ENCODE measurements at regions of chr4 and their contacts with region 1.

Region 1: GRCh38 chr4:110510955-110511544 is 35.1 kb downstream of the ENPEP start:
- DNase-seq: no peak
- ATAC-seq: peak; percentile 53
- H3K4me3 Mint-ChIP-seq: no peak overlapping the region
- H3K27ac Mint-ChIP-seq: no peak overlapping the region
- H3K4me1 Mint-ChIP-seq: peaks cover 11% of the 10 kb centered on the region
- H3K27me3 Mint-ChIP-seq: peaks cover under 1% of the 10 kb centered on the region

Region 2: DNA sequence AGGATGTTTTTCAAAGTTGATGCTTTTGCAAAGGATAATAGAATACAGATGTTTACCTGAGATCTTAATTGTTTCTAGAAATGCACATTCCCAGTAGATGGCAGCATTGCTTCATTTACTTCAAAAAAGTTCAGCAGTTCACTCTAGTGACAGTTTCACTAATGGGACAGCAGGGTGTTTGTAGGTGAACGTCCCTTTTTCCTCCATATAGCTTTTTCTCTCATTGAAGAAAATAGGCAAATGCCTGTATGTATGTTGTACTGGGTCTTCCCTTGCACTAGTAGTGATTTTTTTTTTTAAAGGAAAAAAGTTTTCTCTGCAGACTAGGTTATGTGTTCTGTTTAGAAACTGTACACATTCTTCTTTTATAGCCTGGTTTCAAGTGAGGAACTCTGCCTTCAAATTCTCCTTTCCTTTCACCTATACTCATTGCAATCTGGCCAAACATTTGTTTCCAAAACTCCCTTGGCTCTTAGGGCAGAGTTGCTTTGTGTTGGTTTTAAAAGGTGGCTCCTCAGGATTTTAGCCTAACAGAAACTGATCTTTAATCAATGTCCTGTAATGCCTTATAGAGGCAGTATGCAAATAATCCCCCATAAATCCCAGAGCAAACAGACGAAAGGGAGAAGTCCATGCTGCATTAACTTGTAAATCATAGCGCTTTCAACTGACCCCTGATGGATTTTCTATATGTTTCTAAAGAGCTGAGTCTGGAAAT is 512.0 kb before region 1 on chr4:
- CTCF ChIA-PET with region 1: interaction called, 398 read pairs
- POLR2A ChIA-PET with region 1: no interaction called
- intact Hi-C with region 1: loop called (anchors 1 kb)
- DNase-seq: no peak
- ATAC-seq: peak; percentile 31
- H3K4me3 Mint-ChIP-seq: no peak overlapping the region
- H3K27ac Mint-ChIP-seq: no peak overlapping the region
- H3K4me1 Mint-ChIP-seq: peaks cover 10% of the 10 kb centered on the region
- H3K27me3 Mint-ChIP-seq: peaks cover 9% of the 10 kb centered on the region

Region 3: DNA sequence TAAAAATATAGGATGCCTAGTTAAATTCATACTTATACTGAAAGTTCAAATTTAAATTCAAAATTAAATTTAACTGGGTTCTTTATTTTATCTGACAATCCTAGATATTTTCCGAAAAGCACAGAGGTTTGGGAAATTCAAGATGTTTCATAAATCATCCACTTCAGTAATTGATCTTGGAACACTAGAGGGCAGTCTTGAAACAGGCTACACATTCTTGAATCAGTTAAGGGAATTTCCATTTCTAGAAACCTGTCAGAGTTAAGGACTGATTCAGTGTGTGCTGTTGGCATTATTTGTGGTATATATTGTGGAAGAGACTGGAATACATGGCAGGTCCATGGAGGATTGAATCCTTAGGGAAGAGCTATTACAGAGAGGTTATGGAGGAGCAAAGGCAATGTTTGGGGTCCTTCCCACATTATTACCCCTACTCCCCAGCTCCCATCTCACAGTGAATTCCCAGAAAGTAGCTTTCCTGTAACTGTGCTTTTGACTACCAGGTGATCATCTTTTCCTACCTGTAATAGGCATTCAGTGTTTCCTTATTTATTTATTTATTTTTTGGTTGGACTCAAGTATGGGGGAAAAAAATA is 505.5 kb before region 1 on chr4:
- CTCF ChIA-PET with region 1: interaction called, 398 read pairs
- POLR2A ChIA-PET with region 1: no interaction called
- intact Hi-C with region 1: loop called (anchors 1 kb)
- DNase-seq: no peak
- ATAC-seq: peak; percentile 60
- H3K4me3 Mint-ChIP-seq: no peak overlapping the region
- H3K27ac Mint-ChIP-seq: no peak overlapping the region
- H3K4me1 Mint-ChIP-seq: no peaks in the 10 kb centered on the region
- H3K27me3 Mint-ChIP-seq: no peaks in the 10 kb centered on the region

Region 4: DNA sequence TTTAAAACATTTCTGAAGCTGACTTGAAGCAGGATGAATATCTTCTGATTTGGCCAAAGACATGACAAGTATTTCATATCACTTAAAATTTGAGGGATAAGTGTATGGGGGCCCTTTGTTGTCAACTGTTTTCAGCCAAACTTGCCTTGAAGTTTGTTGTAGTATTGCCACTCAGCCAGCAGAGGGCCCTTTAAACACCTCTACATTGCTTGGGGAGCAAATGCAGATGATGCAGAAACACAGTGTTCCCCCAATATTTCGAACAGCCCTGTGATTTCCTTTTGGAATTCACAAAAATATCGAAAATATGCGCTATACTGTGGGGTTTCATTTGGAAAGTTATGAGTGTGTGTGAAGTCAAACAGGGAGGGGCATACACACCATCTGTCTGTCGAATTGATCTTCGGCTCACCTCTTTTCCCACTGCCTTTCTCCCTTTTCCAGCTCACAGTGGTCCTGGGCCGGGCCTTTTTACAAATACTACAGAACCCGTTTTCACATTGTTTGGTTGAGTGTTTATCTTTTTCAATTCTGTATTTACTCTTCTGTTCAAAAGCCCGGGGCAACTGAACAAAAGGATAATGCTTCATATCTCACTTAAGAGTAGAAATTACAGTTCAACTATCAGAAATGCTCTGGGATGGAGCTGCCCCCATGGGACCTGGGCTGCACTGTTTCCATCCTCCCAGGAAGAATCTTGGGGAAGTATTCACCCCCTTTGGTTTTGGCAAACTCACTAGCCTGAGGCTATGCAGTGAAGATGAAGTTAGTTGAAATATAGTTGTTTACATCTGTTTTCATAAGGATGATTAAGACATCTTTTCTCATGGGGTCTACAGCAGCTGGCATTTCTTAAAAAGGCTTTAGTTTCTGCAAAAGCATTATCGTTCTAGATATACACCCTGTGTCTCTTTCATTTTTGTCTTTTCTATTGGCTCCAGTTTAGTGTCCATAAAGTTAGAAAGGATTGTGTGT is 460.8 kb before region 1 on chr4:
- CTCF ChIA-PET with region 1: interaction called, 13 read pairs
- POLR2A ChIA-PET with region 1: no interaction called
- intact Hi-C with region 1: loop called (anchors 1 to 2 kb)
- DNase-seq: peak; percentile 66
- ATAC-seq: peak; percentile 50
- H3K4me3 Mint-ChIP-seq: no peak overlapping the region
- H3K27ac Mint-ChIP-seq: no peak overlapping the region
- H3K4me1 Mint-ChIP-seq: peaks cover 5% of the 10 kb centered on the region
- H3K27me3 Mint-ChIP-seq: peaks cover 2% of the 10 kb centered on the region

Region 5: DNA sequence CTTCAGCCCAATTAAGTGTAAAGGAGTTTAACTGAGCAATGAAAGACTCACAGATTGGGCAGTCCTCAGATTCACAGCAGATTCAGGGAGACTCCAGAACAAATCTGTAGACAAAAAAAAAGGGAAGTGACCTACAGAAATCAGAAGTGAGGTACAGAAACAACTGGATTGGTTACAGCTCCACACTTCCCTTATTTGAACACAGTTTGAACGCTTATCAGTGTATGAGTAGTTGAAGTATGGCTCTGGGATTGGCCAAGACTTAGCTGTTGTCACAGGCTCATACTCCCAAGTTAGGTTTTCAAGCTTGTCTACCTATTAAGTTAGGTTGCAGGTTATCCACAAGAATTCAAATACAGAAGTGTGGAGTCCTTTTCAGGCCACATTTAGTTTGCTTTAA is 200.3 kb before region 1 on chr4:
- CTCF ChIA-PET with region 1: interaction called, 11 read pairs
- POLR2A ChIA-PET with region 1: no interaction called
- intact Hi-C with region 1: loop called (anchors 1 kb)
- DNase-seq: no peak
- ATAC-seq: no peak
- H3K4me3 Mint-ChIP-seq: no peak overlapping the region
- H3K27ac Mint-ChIP-seq: no peak overlapping the region
- H3K4me1 Mint-ChIP-seq: no peaks in the 10 kb centered on the region
- H3K27me3 Mint-ChIP-seq: peaks cover 16% of the 10 kb centered on the region

Region 6: GRCh38 chr4:110589297-110589696 is 78.2 kb after region 1 on chr4:
- CTCF ChIA-PET with region 1: no interaction called
- POLR2A ChIA-PET with region 1: no interaction called
- intact Hi-C with region 1: no loop called
- DNase-seq: no peak
- ATAC-seq: no peak
- H3K4me3 Mint-ChIP-seq: no peak overlapping the region
- H3K27ac Mint-ChIP-seq: no peak overlapping the region
- H3K4me1 Mint-ChIP-seq: no peaks in the 10 kb centered on the region
- H3K27me3 Mint-ChIP-seq: peaks cover 12% of the 10 kb centered on the region

Region 7: GRCh38 chr4:110681381-110681780 is 170.3 kb after region 1 on chr4:
- CTCF ChIA-PET with region 1: no interaction called
- POLR2A ChIA-PET with region 1: no interaction called
- intact Hi-C with region 1: no loop called
- DNase-seq: no peak
- ATAC-seq: no peak
- H3K4me3 Mint-ChIP-seq: no peak overlapping the region
- H3K27ac Mint-ChIP-seq: no peak overlapping the region
- H3K4me1 Mint-ChIP-seq: no peaks in the 10 kb centered on the region
- H3K27me3 Mint-ChIP-seq: peaks cover 10% of the 10 kb centered on the region